ENCODE measurements at regions of chr9 and their contacts with region 1.

Region 1: DNA sequence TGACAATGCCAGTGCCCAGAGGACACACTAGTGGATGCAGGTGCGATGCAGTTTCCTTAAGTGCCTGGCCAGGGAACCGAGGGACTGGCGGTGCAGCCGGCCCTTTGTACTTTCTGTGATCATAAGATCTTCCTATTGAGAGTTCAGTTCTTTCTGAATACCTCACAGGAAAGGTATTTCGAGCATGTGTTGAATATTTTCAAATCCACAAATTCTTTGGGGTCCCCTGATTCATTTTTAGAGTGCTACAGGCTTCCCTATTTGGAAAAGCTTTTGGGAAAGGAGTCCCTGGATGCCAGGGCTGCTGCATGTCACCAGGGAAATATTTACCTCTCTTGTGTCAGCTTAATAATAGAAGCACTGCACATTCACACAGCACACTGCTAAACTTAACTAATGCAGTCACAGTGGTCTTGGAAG is 281.5 kb downstream of the GADD45G start:
- DNase-seq: no peak
- H3K4me3 ChIP-seq: no peak overlapping the region
- H3K27ac ChIP-seq: no peak overlapping the region
- H3K4me1 ChIP-seq: no peaks in the 10 kb centered on the region
- H3K27me3 ChIP-seq: no peaks in the 10 kb centered on the region
- CTCF ChIP-seq: no peak

Region 2: GRCh38 chr9:89929673-89930480 is 43.6 kb after region 1 on chr9:
- CTCF ChIA-PET with region 1: no interaction called
- dilution Hi-C with region 1: loop called (anchors 5 kb)
- in situ Hi-C with region 1: no loop called
- intact Hi-C with region 1: no loop called
- DNase-seq: peak; percentile 64
- H3K4me3 ChIP-seq: no peak overlapping the region
- H3K27ac ChIP-seq: no peak overlapping the region
- H3K4me1 ChIP-seq: no peaks in the 10 kb centered on the region
- H3K27me3 ChIP-seq: no peaks in the 10 kb centered on the region
- CTCF ChIP-seq: no peak

Measured in mammary epithelial cell (primary cell).